ENCODE measurements at regions of chr7 and their contacts with region 1.

Region 1: GRCh38 chr7:135672560-135673359 is 10.4 kb downstream of the STMP1 start:
- DNase-seq: peak; percentile 75
- ATAC-seq: peak; percentile 84
- H3K4me3 ChIP-seq: peak overlapping the region; percentile 19; the same call in 1 of the 2 replicates
- H3K27ac ChIP-seq: peak overlapping the region; percentile 57
- H3K4me1 ChIP-seq: peaks cover 27% of the 10 kb centered on the region
- H3K27me3 ChIP-seq: no peaks in the 10 kb centered on the region
- CTCF ChIP-seq: peak; percentile 90

Region 2: DNA sequence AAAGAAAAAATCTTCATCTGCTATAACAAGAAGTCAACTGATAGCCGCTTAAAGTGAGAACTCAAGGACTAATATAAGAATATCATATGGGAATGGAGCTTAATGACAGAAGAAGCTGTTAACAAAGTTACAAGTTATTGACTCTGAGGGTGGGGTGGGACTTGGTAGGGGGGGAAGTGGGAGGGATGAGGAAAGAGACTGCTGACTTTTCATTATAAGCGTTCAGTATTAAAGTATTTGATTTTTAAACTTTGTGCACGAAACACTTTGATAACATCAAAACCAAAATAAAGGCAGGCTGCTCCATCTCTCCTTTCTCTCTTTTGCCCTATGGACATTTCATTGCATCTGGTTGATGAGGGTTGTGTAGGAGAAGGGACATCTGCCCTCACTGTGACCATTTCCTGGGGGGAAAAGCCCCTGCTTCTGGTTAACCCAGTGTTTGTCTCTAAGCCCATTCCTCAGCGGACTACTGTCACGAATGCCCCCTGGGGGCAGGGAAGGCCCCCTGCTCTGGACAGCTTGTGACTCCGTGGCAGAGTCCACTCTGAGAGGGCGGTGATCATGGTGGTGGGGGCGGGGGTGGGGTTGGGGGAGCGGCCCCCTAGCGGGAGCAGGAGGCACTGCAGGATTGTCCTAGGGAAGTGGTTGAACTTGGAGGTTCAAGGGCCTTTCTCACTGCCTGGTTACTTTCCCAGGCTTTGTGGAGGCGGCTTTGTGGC is 37.8 kb after region 1 on chr7:
- CTCF ChIA-PET with region 1: interaction called, 4 read pairs
- POLR2A ChIA-PET with region 1: no interaction called
- intact Hi-C with region 1: loop called (anchors 2 kb)
- DNase-seq: peak; percentile 6
- ATAC-seq: no peak
- H3K4me3 ChIP-seq: no peak overlapping the region
- H3K27ac ChIP-seq: no peak overlapping the region
- H3K4me1 ChIP-seq: peaks cover 36% of the 10 kb centered on the region
- H3K27me3 ChIP-seq: no peaks in the 10 kb centered on the region
- CTCF ChIP-seq: peak; percentile 37; the same call in 1 of the 2 replicates

Region 3: DNA sequence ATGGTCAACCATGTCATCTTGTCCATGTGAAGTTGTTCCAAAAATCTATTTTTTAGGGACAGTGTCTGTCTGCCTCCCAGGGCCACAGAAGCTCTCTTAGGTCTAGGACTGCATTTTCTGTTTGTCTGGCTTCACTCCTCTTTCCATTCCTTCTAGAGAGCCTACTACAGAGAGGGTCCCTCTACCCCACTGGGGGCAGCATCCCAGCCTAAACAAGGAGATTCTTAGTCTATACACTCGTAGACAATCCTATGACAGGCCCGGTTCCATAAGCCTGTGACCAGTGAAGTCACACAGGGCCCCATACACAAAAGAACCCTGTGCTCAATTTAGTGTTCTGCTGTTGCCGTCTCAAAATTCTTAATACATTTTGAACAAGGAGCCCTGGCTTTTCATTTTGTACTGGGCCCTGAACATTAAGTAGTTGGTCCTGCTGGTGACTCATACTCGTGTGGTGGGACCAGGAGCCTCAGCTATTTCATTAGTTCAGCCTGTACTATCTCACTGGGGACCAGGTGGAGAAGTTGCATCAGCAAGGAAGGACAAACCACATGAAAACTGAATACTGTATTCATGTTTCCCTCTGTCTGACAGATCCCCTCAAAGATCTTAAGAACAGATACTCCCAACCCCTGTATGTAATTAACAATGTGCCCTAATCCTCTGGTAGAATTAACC is 99.3 kb after region 1 on chr7:
- CTCF ChIA-PET with region 1: interaction called, 6 read pairs
- POLR2A ChIA-PET with region 1: no interaction called
- intact Hi-C with region 1: loop called (anchors 1 kb)
- DNase-seq: peak; percentile 46
- ATAC-seq: no peak; the same call in 1 of the 2 replicates
- H3K4me3 ChIP-seq: no peak overlapping the region
- H3K27ac ChIP-seq: no peak overlapping the region
- H3K4me1 ChIP-seq: peaks cover 19% of the 10 kb centered on the region
- H3K27me3 ChIP-seq: no peaks in the 10 kb centered on the region
- CTCF ChIP-seq: no peak

Region 4: GRCh38 chr7:135886345-135887132 is 213.8 kb after region 1 on chr7:
- CTCF ChIA-PET with region 1: no interaction called
- POLR2A ChIA-PET with region 1: interaction called, 4 read pairs
- intact Hi-C with region 1: loop called (anchors 5 kb)
- DNase-seq: no peak
- ATAC-seq: no peak
- H3K4me3 ChIP-seq: no peak overlapping the region
- H3K27ac ChIP-seq: no peak overlapping the region
- H3K4me1 ChIP-seq: peaks cover 12% of the 10 kb centered on the region
- H3K27me3 ChIP-seq: peaks cover 33% of the 10 kb centered on the region
- CTCF ChIP-seq: no peak

Region 5: GRCh38 chr7:137592232-137592896 is 1919.6 kb after region 1 on chr7:
- CTCF ChIA-PET with region 1: no interaction called
- POLR2A ChIA-PET with region 1: no interaction called
- intact Hi-C with region 1: loop called (anchors 5 kb)
- DNase-seq: peak; percentile 85
- ATAC-seq: peak; percentile 93
- H3K4me3 ChIP-seq: no peak overlapping the region
- H3K27ac ChIP-seq: peak overlapping the region; percentile 61
- H3K4me1 ChIP-seq: peaks cover 12% of the 10 kb centered on the region
- H3K27me3 ChIP-seq: 0 out of 2 replicates have a peak, but pooled peaks cover 4% of the 10 kb centered on the region
- CTCF ChIP-seq: peak; percentile 87

Measured in PC-3 (cell line).